Heart right ventricle (tissue), 16 donors: ENCODE measurements at regions of chr21 and their contacts with region 1.

Region 1: GRCh38 chr21:36319765-36320420 is at the start of gene MORC3:
- DNase-seq: peak; percentile 97 to 98
- ATAC-seq: peak; percentile 96 to 99 (median 98)
- H3K4me3 ChIP-seq: peak within 1 kb of the TSS; percentile 40 to 96 (median 82)
- H3K27ac ChIP-seq: peak within 1 kb of the TSS; percentile 92 to 99 (median 98)
- H3K4me1 ChIP-seq: peaks cover 3 to 46% (median 38%) of the 10 kb centered on the region in 9 donors
- H3K27me3 ChIP-seq: no peaks in the 10 kb centered on the region
- CTCF ChIP-seq: no peak
- total RNA-seq, gene MORC3: 14.6 to 21.2 (median 16.7) TPM

Region 2: DNA sequence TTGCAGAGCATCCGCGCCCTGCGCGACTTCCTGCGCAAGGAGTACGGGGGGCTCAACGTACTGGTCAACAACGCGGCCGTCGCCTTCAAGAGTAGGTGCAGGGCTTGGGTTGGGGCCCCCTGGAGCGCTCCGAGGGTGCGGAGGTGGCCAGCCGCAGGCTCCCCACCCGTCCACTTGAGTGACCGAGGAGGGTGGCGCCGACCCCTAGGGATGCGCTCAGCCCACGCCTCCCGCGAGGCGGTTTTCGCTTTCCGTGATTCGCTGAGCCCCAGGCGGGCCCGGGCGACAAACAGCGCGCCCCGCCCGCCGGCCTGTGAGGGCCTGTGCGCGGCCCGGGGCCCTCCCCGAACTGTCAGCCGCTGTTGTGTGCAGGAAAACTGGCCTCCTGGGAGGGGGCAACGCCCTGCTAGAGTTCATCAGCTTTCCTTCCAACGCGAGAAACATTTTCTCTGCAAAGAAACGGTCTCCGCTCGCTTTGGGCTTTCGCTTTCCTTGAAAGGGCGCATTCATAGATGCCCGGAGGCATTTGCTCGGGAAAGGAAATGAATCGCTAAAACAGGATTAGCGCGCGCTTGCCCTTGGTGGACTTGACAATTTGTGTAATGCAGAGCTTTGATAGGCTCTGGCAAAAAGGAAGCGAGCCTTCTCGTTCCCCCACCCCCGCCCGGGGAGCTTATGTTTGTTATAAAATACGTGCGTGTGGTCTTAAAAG is 184.3 kb before region 1 on chr21:
- intact Hi-C with region 1: loop called in 5 of 10 experiments (anchors 5 to 10 kb)
- DNase-seq: peak; percentile 73 to 83
- ATAC-seq: peak; percentile 87 to 92 (median 90)
- H3K4me3 ChIP-seq: peak overlapping the region; percentile 42 to 80 (median 68)
- H3K27ac ChIP-seq: peak overlapping the region; percentile 78 to 95 (median 90)
- H3K4me1 ChIP-seq: peaks cover 2 to 44% (median 24%) of the 10 kb centered on the region in 9 donors
- H3K27me3 ChIP-seq: peaks cover 0 to 4% (median 0%) of the 10 kb centered on the region in 7 donors
- CTCF ChIP-seq: no peak

Region 3: GRCh38 chr21:36141513-36141925 is 178.4 kb before region 1 on chr21:
- intact Hi-C with region 1: loop called in 5 of 10 experiments (anchors 5 to 10 kb)
- DNase-seq: peak in 1 of 2 donors; percentile 86
- ATAC-seq: peak; percentile 73 to 87 (median 82)
- H3K4me3 ChIP-seq: no peak overlapping the region
- H3K27ac ChIP-seq: no peak overlapping the region
- H3K4me1 ChIP-seq: peaks cover 0 to 11% (median 5%) of the 10 kb centered on the region in 9 donors
- H3K27me3 ChIP-seq: no peaks in the 10 kb centered on the region
- CTCF ChIP-seq: peak; percentile 64 to 87 (median 84)

Region 4: GRCh38 chr21:36149788-36150711 is 169.8 kb before region 1 on chr21:
- intact Hi-C with region 1: loop called in 6 of 10 experiments (anchors 5 to 10 kb)
- DNase-seq: peak in 1 of 2 donors; percentile 48
- ATAC-seq: peak; percentile 79 to 92 (median 88)
- H3K4me3 ChIP-seq: peak overlapping the region in 1 of 10 donors; percentile 8
- H3K27ac ChIP-seq: peak overlapping the region; percentile 30 to 91 (median 71)
- H3K4me1 ChIP-seq: peaks cover 4 to 22% (median 18%) of the 10 kb centered on the region in 9 donors
- H3K27me3 ChIP-seq: no peaks in the 10 kb centered on the region
- CTCF ChIP-seq: no peak

Region 5: DNA sequence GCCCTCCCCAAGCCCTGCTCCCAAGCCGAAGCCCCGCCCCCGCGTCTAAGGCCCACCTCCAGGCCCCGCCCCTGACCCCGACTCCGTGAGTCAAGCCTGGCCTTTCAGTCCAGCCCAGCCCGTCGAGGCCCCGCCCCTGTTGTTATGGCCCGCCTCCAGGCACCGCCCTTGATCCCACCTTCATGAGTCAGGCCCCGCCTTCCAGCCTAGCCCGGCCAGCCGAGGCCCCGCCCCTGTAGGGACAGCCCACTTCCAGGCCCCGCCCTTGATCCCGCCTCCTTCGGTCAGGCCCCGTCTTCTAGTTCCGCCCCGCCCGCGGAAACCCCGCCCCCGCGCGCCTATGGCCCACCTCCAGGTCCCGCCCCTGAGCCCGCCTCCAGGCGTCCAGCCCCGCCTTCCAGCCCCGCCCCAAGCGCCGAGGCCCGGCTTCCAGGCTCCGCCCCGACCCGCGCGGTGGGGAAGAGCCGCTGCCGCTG is 163.5 kb before region 1 on chr21:
- intact Hi-C with region 1: loop called in 6 of 10 experiments (anchors 1 to 5 kb)
- DNase-seq: peak; percentile 99 to 100
- ATAC-seq: peak; percentile 94 to 98 (median 96)
- H3K4me3 ChIP-seq: peak overlapping the region; percentile 71 to 98 (median 90)
- H3K27ac ChIP-seq: peak overlapping the region; percentile 37 to 95 (median 89)
- H3K4me1 ChIP-seq: peaks cover 0 to 29% (median 21%) of the 10 kb centered on the region in 9 donors
- H3K27me3 ChIP-seq: no peaks in the 10 kb centered on the region
- CTCF ChIP-seq: no peak

Region 6: DNA sequence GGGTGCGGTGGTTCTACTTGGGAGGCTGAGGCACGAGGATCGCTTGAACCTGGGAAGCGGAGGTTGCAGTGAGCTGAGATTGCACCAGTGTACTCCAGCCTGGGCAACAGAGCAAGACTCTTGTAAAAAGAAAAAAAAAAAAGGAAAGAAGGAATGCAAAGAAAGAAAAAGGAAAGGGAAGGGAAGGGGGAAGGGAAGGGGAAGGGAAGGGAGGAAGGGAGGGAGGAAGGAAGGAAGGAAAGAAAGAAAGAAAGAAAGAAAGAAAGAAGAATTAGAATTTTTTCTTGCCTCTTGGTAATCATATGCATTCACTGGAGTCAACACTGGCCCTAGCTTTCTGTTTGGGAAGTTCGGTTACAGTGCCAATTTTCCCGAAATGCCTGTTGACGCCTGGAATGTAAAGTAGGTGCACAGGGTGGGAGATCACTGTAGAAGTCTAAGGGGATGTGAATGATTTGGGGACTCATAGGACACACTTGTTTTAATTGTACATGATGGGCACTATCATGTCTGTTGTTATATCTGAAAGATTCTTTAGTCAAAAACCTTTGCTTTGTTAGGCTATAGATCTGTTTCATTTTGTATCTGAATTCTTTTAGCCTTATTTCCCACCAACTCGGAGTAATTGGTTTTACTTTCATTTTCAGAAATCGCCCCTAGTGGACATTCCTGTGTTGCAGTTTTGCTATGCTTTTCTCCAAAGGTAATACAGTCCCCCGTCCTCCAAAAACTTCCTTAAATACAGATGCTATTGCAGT is 59.7 kb before region 1 on chr21:
- intact Hi-C with region 1: loop called in 3 of 10 experiments (anchors 5 to 10 kb)
- DNase-seq: peak in 1 of 2 donors; percentile 57
- ATAC-seq: peak; percentile 47 to 90 (median 78)
- H3K4me3 ChIP-seq: peak overlapping the region; percentile 13 to 65 (median 54)
- H3K27ac ChIP-seq: peak overlapping the region in 9 of 10 donors; percentile 50 to 92 (median 79)
- H3K4me1 ChIP-seq: peaks cover 0 to 10% (median 0%) of the 10 kb centered on the region in 9 donors
- H3K27me3 ChIP-seq: no peaks in the 10 kb centered on the region
- CTCF ChIP-seq: peak; percentile 59 to 84 (median 75)

Region 7: GRCh38 chr21:36385233-36386030 is 65.5 kb after region 1 on chr21 and contains the start of gene CHAF1B:
- intact Hi-C with region 1: loop called in 1 of 10 experiments (anchors 10 kb)
- DNase-seq: peak; percentile 61 to 81
- ATAC-seq: peak; percentile 90 to 96 (median 94)
- H3K4me3 ChIP-seq: peak within 1 kb of the TSS; percentile 54 to 69 (median 62)
- H3K27ac ChIP-seq: peak within 1 kb of the TSS in 3 of 10 donors; percentile 18 to 62 (median 22)
- H3K4me1 ChIP-seq: peaks cover 0 to 7% (median 4%) of the 10 kb centered on the region in 9 donors
- H3K27me3 ChIP-seq: no peaks in the 10 kb centered on the region
- CTCF ChIP-seq: no peak
- total RNA-seq, gene CHAF1B: 0.24 to 1.3 (median 0.48) TPM